Mammary epithelial cell (primary cell): ENCODE measurements at regions of chr17 and their contacts with region 1.

Region 1: DNA sequence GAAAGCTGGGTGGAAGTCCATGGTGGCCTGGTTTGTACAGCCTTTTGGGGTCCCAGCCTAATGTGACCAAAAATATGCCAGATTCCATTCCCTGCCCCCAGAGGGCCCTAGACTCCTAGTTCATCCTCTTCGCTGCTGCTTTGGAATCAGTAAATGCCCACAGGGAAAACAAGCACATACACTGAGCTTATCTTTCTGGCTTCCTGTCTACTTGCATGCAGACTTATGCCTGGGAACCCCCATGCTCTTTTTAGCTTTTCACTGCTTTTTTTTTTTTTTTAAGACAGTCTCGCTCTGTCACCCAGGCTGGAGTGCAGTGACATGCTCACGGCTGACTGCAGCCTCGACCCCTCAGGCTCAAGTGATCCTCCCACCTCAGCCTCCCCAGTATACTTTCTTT is 6.2 kb upstream of the CD300LG start:
- DNase-seq: no peak
- H3K4me3 ChIP-seq: no peak overlapping the region
- H3K27ac ChIP-seq: no peak overlapping the region
- H3K4me1 ChIP-seq: peaks cover 31% of the 10 kb centered on the region
- H3K27me3 ChIP-seq: no peaks in the 10 kb centered on the region
- CTCF ChIP-seq: no peak

Region 2: GRCh38 chr17:43456661-43457361 is 384.0 kb before region 1 on chr17:
- CTCF ChIA-PET with region 1: no interaction called
- dilution Hi-C with region 1: no loop called
- in situ Hi-C with region 1: no loop called
- intact Hi-C with region 1: no loop called
- DNase-seq: peak; percentile 42
- H3K4me3 ChIP-seq: no peak overlapping the region
- H3K27ac ChIP-seq: peak overlapping the region; percentile 18
- H3K4me1 ChIP-seq: peaks cover 30% of the 10 kb centered on the region
- H3K27me3 ChIP-seq: no peaks in the 10 kb centered on the region
- CTCF ChIP-seq: no peak

Region 3: GRCh38 chr17:43803758-43804157 is 37.1 kb before region 1 on chr17:
- CTCF ChIA-PET with region 1: no interaction called
- dilution Hi-C with region 1: loop called (anchors 5 kb)
- in situ Hi-C with region 1: no loop called
- intact Hi-C with region 1: no loop called
- DNase-seq: no peak
- H3K4me3 ChIP-seq: no peak overlapping the region
- H3K27ac ChIP-seq: no peak overlapping the region
- H3K4me1 ChIP-seq: no peaks in the 10 kb centered on the region
- H3K27me3 ChIP-seq: no peaks in the 10 kb centered on the region
- CTCF ChIP-seq: no peak

Region 4: GRCh38 chr17:43814714-43815113 is 26.1 kb before region 1 on chr17:
- CTCF ChIA-PET with region 1: no interaction called
- dilution Hi-C with region 1: no loop called
- in situ Hi-C with region 1: no loop called
- intact Hi-C with region 1: no loop called
- DNase-seq: peak; percentile 67
- H3K4me3 ChIP-seq: no peak overlapping the region
- H3K27ac ChIP-seq: no peak overlapping the region
- H3K4me1 ChIP-seq: peaks cover 12% of the 10 kb centered on the region
- H3K27me3 ChIP-seq: no peaks in the 10 kb centered on the region
- CTCF ChIP-seq: no peak